Aorta (tissue), 5 donors: ENCODE measurements at regions of chr14 and their contacts with region 1.

Region 1: DNA sequence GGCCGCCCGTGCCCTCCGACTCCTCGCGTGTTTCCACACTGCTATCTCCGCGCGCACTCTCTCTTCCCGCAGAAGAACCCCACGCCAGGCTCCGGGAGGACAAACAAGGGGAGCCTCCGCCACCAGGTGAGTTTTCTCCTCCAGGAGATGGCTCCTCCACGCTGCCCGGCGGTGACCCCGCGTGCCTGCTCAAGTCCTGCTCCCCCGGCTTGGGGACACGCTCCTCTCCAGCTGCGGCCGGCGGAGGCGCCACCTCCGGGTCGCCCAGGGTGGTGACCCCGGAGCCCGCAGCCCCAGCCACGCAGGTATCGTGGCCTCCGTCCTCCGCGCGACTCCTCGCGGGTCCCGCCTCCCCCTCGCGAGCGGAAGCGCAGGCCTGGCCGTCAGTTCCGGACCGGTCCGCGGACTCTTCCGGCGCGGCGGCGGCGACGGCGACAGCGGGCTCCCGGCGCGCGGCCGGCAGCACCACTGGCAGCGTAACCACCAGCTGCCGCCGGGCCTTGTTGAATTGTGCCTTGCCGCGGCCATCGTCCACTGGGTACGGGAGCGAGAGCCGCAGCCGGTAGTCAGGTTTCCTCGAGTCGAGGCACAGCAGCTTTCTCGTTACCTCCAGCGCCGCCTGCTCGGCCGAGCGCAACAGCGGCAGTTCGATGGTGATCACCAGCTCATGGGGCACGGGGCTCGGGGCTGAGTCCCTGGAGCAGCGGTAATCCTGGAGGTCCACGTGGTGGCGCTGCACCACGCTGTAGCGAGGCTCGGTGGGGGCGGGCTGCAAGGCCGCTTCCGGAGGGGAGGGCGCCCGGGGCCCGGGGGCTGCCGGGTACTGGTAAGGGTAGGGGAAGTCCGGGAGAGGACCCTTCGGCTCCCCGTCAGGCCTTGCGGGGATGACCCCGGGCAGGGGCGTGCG is 1.2 kb downstream of the DNAAF2 start:
- DNase-seq: peak; percentile 96 to 97
- ATAC-seq: peak; percentile 98
- H3K4me3 ChIP-seq: peak overlapping the region; percentile 58 to 81
- H3K27ac ChIP-seq: peak overlapping the region; percentile 8 to 66
- H3K4me1 ChIP-seq: peaks cover 0 to 5% of the 10 kb centered on the region in 2 donors
- H3K27me3 ChIP-seq: no peaks in the 10 kb centered on the region

Region 2: DNA sequence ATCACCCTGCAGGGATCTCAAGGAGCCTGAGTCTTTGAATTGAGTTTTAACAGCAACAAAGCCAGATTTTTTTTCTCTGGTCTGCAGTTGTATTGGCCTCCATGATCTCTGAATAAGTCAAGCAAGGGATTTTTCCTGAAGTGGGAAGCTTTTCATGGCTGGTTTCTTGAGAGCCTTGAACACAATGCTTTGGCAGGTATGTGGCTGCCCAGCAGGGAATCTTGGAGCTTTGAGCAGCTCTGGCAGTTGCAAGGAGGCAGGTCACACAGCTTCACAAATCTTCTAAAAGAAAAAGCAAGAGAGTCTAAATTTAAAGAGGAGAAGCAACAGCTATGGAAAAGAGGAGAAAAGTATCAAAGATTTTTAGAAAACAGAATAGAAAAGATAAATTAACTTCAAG is 107.8 kb before region 1 on chr14:
- intact Hi-C with region 1: no loop called
- DNase-seq: no peak
- ATAC-seq: no peak
- H3K4me3 ChIP-seq: no peak overlapping the region
- H3K27ac ChIP-seq: no peak overlapping the region
- H3K4me1 ChIP-seq: no peaks in the 10 kb centered on the region
- H3K27me3 ChIP-seq: no peaks in the 10 kb centered on the region

Region 3: GRCh38 chr14:49692811-49693734 is 59.2 kb after region 1 on chr14 and contains the start of gene KLHDC1:
- intact Hi-C with region 1: loop called (anchors 5 kb)
- DNase-seq: peak; percentile 94 to 95
- ATAC-seq: peak; percentile 95
- H3K4me3 ChIP-seq: peak within 1 kb of the TSS; percentile 62 to 69
- H3K27ac ChIP-seq: peak within 1 kb of the TSS; percentile 48 to 62
- H3K4me1 ChIP-seq: no peaks in the 10 kb centered on the region
- H3K27me3 ChIP-seq: no peaks in the 10 kb centered on the region
- total RNA-seq, gene KLHDC1: 10.1 to 19.4 TPM

Region 4: DNA sequence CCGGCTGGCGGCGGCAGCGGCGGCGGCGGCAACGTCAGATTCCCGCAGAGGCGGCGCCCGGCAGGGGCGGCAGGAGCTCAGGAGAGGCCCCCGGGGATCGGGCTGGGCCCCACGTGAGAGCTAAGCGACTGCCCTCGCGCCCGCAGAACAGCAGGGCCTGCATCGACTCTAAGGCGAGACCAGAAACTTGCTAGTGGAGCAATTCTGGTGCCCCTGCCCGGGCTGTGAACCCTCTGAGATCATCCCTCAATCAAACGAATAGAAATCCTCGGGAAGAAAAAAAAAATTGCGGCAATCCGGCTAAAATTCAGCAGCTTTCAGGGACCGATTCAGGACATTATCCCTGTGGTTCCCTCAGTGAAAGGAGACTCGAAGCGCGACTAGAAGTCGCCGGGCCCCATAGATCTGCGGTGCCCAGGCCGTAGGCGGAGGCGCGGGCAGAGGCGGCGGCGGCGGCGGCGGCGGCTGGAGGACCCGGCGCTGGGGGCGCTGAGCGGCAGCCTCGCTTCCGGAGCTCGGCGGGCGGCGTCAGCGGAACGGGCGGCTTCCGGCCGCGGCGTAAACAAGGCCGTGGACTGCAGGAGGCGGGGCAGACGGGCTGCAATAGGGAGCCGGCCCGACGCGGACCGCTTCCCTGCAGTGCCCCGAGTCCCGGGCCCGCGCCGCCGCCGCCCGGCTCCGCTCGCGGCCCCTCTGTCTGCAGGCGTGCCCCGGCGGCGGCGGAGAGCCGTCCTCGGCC is 133.8 kb after region 1 on chr14 and contains the start of gene KLHDC2:
- intact Hi-C with region 1: loop called in 1 of 2 experiments (anchors 2 kb)
- DNase-seq: peak; percentile 95 to 96
- ATAC-seq: peak; percentile 95
- H3K4me3 ChIP-seq: peak within 1 kb of the TSS; percentile 95 to 96
- H3K27ac ChIP-seq: peak within 1 kb of the TSS; percentile 89 to 96
- H3K4me1 ChIP-seq: peaks cover 0 to 3% of the 10 kb centered on the region in 2 donors
- H3K27me3 ChIP-seq: no peaks in the 10 kb centered on the region
- total RNA-seq, gene KLHDC2: 49.1 to 56.3 TPM

Region 5: GRCh38 chr14:49852301-49853157 is 218.6 kb after region 1 on chr14 and contains the start of gene NEMF:
- intact Hi-C with region 1: loop called (anchors 10 kb)
- DNase-seq: peak; percentile 92 to 94
- ATAC-seq: peak; percentile 96
- H3K4me3 ChIP-seq: peak within 1 kb of the TSS; percentile 53 to 71
- H3K27ac ChIP-seq: peak within 1 kb of the TSS in 1 of 2 donors; percentile 45
- H3K4me1 ChIP-seq: no peaks in the 10 kb centered on the region
- H3K27me3 ChIP-seq: no peaks in the 10 kb centered on the region
- total RNA-seq, gene NEMF: 70.7 to 75.8 TPM